ENCODE measurements at regions of chr14 and their contacts with region 1.

Region 1: DNA sequence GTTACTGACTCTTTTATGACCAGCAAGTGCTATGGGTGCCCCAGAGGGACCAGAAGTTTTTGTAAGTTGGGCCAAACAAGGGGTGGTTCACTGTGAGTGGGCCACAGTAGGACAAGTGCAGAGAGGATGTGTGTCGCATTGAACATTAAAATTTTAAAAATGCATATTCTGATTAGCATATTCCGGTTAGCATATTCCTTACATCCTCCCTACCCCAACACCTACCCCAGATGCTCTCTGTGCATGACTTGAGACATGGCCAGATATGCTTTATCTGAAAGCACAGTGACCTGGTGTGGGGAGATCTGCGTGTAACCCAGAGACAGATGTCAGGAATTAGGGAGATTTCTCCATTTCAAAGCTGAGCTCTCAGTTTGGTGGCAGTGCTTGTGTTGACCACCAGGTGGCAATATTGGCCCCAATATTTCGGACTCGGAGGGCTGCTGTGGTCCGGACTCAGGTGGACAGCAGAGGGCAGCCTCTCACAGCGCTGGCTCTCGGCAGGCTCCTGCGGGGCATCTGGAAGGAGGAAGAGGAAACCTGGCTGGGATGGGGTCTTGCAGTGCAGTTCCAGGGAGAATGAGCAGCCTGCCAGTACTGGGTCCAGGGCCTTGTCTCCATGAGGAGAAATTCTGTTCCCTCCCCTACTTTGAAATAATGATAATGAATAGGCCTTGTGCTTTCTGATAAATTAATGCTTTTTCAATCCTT is 1.6 kb upstream of the CEBPE start:
- DNase-seq: peak; percentile 50 to 90 (median 79)
- ATAC-seq: peak; percentile 70
- H3K4me3 ChIP-seq: peak overlapping the region in 1 of 2 experiments; percentile 18
- H3K4me3 Mint-ChIP-seq: peak overlapping the region; percentile 77
- H3K27ac ChIP-seq: peak overlapping the region; percentile 47 to 59
- H3K27ac Mint-ChIP-seq: peak overlapping the region; percentile 96
- H3K4me1 ChIP-seq: peaks cover 56% of the 10 kb centered on the region
- H3K4me1 Mint-ChIP-seq: peaks cover 60% of the 10 kb centered on the region
- H3K27me3 ChIP-seq: no peaks in the 10 kb centered on the region
- H3K27me3 Mint-ChIP-seq: no peaks in the 10 kb centered on the region
- CTCF ChIP-seq: peak; percentile 98

Region 2: DNA sequence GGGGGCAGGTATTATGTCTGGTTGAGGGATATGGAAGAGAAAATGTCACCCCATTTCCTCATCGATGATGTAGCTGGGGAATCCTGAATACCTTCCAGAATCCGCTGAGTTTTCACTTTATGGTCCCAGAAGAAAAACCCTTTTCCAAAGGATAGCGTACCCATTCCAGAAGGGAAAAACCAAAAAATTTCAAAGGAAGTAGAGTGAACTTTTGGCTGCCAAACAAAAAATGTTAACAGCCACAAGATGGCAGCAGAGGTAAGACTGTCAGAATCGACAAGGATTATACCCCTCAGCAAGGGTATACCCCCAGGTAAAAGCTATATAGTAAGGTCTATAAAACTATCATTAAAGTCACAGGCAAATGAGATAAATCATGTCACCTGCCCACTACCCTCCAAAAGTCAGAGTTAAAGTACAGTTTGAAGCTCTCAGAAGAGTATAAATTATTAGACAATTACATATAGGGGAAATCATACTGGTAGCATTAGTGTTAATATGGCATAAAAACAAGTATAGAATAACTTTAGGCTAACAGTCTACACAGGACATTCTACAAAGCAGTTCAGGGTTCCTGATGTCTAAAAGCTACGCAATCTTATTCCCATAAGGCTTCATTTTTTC is 43.8 kb before region 1 on chr14:
- CTCF ChIA-PET with region 1: interaction called, 33 read pairs
- POLR2A ChIA-PET with region 1: no interaction called
- intact Hi-C with region 1: no loop called
- DNase-seq: peak in 3 of 9 experiments; percentile 43 to 66 (median 56)
- ATAC-seq: peak; percentile 89
- H3K4me3 ChIP-seq: no peak overlapping the region
- H3K4me3 Mint-ChIP-seq: no peak overlapping the region
- H3K27ac ChIP-seq: no peak overlapping the region
- H3K27ac Mint-ChIP-seq: no peak overlapping the region
- H3K4me1 ChIP-seq: peaks cover 2% of the 10 kb centered on the region
- H3K4me1 Mint-ChIP-seq: peaks cover 19% of the 10 kb centered on the region
- H3K27me3 ChIP-seq: no peaks in the 10 kb centered on the region
- H3K27me3 Mint-ChIP-seq: no peaks in the 10 kb centered on the region
- CTCF ChIP-seq: peak; percentile 85

Region 3: DNA sequence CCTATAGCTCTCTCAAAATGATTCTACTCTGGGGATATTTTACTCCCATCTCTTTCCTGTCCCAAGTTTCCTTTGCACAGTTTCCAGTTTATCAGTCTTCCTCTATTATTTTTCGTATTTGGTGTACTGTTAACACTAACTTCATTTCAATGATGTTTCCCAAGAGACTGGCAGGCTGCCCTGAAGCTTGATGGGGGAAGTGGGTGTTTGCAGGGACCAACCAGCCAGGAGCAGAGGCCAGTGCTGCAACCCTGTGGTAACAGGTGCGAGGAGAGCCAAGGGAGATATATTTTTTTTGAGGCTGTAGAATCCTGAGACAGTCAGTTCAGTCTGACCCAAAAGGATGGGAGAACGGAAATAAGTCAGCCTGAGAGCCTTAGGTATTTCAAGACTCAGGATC is 10.2 kb after region 1 on chr14:
- CTCF ChIA-PET with region 1: interaction called, 18 read pairs
- POLR2A ChIA-PET with region 1: interaction called, 6 read pairs
- intact Hi-C with region 1: no loop called
- DNase-seq: no peak
- ATAC-seq: no peak
- H3K4me3 ChIP-seq: no peak overlapping the region
- H3K4me3 Mint-ChIP-seq: no peak overlapping the region
- H3K27ac ChIP-seq: no peak overlapping the region
- H3K27ac Mint-ChIP-seq: no peak overlapping the region
- H3K4me1 ChIP-seq: no peaks in the 10 kb centered on the region
- H3K4me1 Mint-ChIP-seq: peaks cover 2% of the 10 kb centered on the region
- H3K27me3 ChIP-seq: no peaks in the 10 kb centered on the region
- H3K27me3 Mint-ChIP-seq: no peaks in the 10 kb centered on the region
- CTCF ChIP-seq: no peak

Region 4: DNA sequence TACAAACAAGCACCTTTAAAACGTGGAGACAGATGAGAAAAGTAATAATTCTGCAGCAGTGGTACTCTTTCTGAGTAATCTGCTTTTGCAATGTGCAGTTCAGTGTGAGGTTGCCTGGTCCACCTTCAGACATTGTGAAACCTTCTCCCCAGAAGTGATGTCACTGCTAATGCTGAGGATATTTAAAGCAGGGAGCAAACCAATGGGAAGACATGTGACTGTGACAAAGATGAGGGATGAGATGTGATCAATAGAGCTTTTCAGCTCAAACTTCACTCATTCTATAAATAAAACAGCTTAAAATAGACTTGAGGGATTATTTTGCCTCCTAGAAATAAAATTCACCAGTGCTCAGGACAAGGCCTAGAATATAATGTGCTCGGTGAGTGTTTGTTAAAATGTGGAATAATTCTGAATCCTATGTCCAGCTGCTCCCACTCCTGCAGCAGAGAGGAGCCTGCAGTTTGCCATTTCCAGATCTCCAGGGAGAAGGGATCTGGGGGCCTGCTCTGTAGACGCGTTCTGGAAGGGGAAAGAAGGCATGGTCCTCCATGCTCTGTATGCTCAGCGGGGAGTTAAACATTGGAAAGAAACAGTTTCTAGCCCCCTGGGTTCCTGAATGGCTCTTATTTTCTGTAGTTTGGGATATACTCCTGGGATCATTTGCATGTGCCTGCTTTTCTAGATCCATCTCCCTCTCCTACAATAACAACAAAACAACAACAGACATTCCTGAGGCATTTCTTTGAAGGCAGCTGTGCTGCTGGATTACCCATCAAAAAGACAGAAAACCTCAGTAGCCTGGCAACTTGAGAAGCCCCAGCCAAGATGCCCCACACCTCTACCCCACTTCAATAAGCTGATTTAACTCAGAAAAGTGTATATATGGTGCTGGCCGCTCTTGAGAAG is 53.8 kb after region 1 on chr14:
- CTCF ChIA-PET with region 1: interaction called, 43 read pairs
- POLR2A ChIA-PET with region 1: interaction called, 4 read pairs
- intact Hi-C with region 1: no loop called
- DNase-seq: no peak
- ATAC-seq: no peak
- H3K4me3 ChIP-seq: no peak overlapping the region
- H3K4me3 Mint-ChIP-seq: no peak overlapping the region
- H3K27ac ChIP-seq: no peak overlapping the region
- H3K27ac Mint-ChIP-seq: no peak overlapping the region
- H3K4me1 ChIP-seq: peaks cover 45% of the 10 kb centered on the region
- H3K4me1 Mint-ChIP-seq: peaks cover 60% of the 10 kb centered on the region
- H3K27me3 ChIP-seq: no peaks in the 10 kb centered on the region
- H3K27me3 Mint-ChIP-seq: peaks cover 4% of the 10 kb centered on the region
- CTCF ChIP-seq: no peak

Region 5: GRCh38 chr14:23294734-23295561 is 174.3 kb after region 1 on chr14:
- CTCF ChIA-PET with region 1: interaction called, 8 read pairs
- POLR2A ChIA-PET with region 1: no interaction called
- intact Hi-C with region 1: loop called in 1 of 2 experiments (anchors 5 kb)
- DNase-seq: peak in 8 of 9 experiments; percentile 37 to 86 (median 60)
- ATAC-seq: peak; percentile 90
- H3K4me3 ChIP-seq: no peak overlapping the region
- H3K4me3 Mint-ChIP-seq: peak overlapping the region; percentile 47
- H3K27ac ChIP-seq: no peak overlapping the region
- H3K27ac Mint-ChIP-seq: peak overlapping the region; percentile 45
- H3K4me1 ChIP-seq: peaks cover 14% of the 10 kb centered on the region
- H3K4me1 Mint-ChIP-seq: peaks cover 22% of the 10 kb centered on the region
- H3K27me3 ChIP-seq: no peaks in the 10 kb centered on the region
- H3K27me3 Mint-ChIP-seq: no peaks in the 10 kb centered on the region
- CTCF ChIP-seq: peak; percentile 82

Region 6: GRCh38 chr14:23469127-23469905 is 348.6 kb after region 1 on chr14 and contains the start of gene NGDN:
- CTCF ChIA-PET with region 1: no interaction called
- POLR2A ChIA-PET with region 1: no interaction called
- intact Hi-C with region 1: loop called in 1 of 2 experiments (anchors 1 kb)
- DNase-seq: peak; percentile 84 to 99 (median 93)
- ATAC-seq: peak; percentile 89
- H3K4me3 ChIP-seq: peak within 1 kb of the TSS; percentile 71 to 83
- H3K4me3 Mint-ChIP-seq: no peak within 1 kb of the TSS
- H3K27ac ChIP-seq: peak within 1 kb of the TSS; percentile 80 to 93
- H3K27ac Mint-ChIP-seq: peak within 1 kb of the TSS; percentile 6
- H3K4me1 ChIP-seq: peaks cover 16% of the 10 kb centered on the region
- H3K4me1 Mint-ChIP-seq: peaks cover 12% of the 10 kb centered on the region
- H3K27me3 ChIP-seq: no peaks in the 10 kb centered on the region
- H3K27me3 Mint-ChIP-seq: no peaks in the 10 kb centered on the region
- CTCF ChIP-seq: peak; percentile 83
- total RNA-seq, gene NGDN: 173 TPM